Right ventricle myocardium inferior (tissue), 1 donor: ENCODE measurements at regions of chr2 and their contacts with region 1.

Region 1: DNA sequence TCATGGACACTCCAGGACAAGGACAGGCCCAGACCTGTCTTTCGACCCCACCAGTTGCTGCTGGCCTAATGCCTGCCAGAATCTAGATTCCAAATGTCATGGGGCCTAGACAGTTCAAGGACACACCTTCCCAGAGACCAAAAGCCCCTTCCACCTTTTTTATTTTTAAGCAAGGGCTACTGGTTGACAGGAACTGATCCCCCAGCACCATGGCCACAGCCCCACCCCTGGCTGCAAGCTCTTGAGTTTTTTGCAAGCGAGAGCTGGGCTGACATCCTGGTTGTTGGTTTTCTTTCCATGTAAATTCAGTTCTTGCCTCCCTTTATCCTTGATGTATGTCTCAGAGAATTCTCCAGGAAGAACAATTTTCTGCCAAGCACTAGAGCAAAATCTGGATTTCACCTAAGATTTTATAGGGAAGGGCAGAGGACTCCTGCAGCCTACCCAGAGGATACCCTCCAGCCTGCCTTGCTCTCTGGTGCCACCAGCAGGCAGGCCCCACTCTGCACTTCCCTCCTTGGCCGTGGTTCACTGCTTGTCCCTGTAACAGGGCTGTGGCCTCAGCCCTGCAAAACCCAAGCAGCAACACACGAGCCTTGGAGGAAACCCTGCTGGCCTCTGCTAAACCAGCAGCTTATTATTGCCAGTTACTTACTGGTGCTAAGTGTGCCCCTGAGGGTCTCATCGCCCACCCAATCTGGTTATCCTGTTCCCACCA is 97.7 kb downstream of the TWIST2 start:
- DNase-seq: peak; percentile 78
- ATAC-seq: peak; percentile 90

Region 2: DNA sequence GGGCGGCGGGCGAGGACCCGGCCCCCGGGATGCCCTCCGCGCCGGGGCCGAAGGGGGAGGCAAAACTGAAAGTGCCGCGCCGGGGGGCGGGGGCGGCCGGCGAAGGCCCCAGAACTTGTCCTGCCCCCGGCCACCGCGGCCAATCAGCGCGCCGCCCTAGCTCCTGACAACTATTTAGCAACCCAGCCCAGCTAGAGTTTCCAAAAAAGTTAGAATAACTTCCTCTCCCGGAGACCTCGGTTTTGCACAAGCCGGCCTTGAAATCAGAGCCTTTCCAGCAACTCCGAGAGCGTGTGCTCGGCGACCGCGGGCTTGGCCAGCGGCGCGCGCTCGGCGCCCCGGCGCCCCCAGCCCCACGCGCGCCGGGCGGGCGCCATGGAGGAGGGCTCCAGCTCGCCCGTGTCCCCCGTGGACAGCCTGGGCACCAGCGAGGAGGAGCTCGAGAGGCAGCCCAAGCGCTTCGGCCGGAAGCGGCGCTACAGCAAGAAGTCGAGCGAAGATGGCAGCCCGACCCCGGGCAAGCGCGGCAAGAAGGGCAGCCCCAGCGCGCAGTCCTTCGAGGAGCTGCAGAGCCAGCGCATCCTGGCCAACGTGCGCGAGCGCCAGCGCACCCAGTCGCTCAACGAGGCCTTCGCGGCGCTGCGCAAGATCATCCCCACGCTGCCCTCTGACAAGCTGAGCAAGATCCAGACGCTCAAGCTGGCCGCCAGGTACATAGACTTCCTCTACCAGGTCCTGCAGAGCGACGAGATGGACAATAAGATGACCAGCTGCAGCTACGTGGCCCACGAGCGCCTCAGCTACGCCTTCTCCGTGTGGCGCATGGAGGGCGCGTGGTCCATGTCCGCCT is 97.5 kb before region 1 on chr2 and contains the start of gene TWIST2:
- intact Hi-C with region 1: loop called (anchors 5 kb)
- DNase-seq: peak; percentile 87
- ATAC-seq: peak; percentile 86
- total RNA-seq, gene TWIST2: 2.6 TPM